ACHN (cell line): ENCODE measurements at regions of chr1 and their contacts with region 1.

Region 1: GRCh38 chr1:147504801-147505311 is 36.4 kb upstream of the BCL9 start:
- DNase-seq: no peak

Region 2: DNA sequence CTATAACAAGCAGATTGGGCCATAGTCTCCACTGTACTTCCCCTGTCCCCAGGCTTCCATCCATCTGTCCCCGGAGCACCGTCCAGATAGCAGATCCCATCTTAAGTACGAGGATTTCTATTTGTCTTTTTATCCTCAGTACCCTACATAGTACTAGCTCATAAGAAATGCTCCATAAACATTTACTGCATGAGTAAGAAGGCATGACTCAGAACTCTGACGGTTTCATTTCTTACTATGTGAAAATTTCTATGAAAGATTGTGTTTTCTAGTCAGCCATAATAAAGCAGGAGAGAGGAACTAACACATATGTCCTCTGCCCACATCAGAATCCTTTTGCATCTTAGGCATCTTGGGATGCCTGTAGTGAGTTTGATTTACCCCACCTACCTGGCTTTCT is 212.8 kb before region 1 on chr1:
- in situ Hi-C with region 1: no loop called
- DNase-seq: peak; percentile 43

Region 3: DNA sequence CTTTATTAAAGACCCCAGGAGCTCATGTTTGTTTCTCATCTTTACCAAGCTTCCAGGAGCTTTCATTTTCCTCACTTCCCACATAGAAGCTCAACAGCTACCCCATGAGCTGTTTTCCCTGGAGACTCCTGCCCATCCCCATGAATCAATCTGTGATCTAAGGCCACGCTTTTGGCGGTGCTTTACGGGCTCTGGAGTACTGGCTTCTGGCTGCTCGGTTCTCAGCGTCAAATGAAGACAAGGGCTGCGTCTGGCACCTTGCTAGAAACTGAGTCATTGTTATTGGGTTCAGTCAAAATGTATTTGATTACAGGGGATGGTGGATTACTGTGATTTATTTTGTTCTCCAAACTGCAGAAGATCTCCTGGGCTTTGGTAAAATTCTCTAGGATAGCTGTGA is 125.6 kb after region 1 on chr1:
- in situ Hi-C with region 1: loop called (anchors 10 kb)
- DNase-seq: no peak